ENCODE measurements at regions of chr4 and their contacts with region 1.

Region 1: DNA sequence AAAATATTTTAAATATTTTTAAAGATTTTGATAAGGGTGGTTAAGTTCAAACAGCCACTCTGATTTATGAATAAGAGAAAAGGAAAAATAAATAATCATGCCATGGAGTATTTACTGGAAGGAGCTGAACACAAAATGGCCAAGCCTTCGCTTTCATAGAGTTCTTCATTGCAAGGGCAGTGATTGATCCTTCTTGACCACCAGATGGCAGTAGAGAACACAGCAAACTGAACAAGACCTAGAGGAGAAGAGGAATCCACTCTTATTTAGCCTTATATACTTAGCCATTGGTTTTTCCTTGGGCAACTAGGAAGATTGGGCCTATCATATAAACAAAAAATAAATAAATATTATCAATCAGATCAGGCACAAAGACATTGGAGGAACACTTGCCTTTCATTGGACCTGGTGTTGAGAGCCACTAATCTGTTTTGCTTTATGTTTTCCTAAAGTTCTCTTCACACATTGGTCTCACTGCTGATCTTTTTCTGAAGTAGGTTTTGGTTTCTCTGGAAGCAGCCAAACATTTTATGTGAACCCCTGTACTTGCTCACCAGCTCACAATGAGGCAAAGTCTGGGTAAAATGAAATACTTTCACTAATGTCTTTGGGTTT is 58.1 kb upstream of the PARM1 start:
- DNase-seq: no peak
- H3K4me3 ChIP-seq: no peak overlapping the region
- H3K27ac ChIP-seq: no peak overlapping the region
- H3K4me1 ChIP-seq: no peaks in the 10 kb centered on the region
- H3K27me3 ChIP-seq: no peaks in the 10 kb centered on the region
- CTCF ChIP-seq: peak in 2 of 3 experiments; percentile 65 to 84; a peak in 3 of 4 replicates
- EP300 ChIP-seq: no peak
- POLR2A ChIP-seq: no peak
- RAD21 ChIP-seq: peak; percentile 86

Region 2: DNA sequence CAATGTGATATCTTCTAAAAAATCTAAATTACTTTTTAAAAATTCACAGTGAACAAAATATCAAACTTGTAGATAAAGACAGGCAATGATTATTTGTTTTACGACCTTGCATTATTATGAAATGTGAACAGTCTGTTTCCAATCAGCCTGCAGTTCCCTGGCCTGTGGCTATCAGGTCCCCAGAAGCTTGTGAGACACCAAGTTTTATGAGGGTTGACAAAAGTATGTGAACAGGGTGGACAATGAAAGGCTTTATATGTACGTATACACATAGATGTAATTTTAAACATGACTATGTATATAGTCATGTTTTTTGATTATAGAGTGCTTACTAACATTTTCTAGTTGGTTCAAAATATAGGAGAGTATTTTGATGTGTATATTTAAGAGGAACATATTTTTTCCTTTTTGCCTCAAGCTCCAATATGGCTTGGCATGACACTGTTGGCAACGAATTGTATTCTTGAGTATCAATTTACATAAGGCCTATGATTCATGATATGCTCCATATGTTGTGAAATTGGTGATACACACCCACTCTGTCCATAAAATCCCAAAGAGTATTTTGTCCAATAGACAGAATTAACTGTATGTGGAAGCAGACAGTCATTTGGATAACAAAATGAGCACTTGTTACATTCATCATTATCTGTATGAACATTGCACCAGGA is 136.3 kb before region 1 on chr4:
- CTCF ChIA-PET with region 1: no interaction called
- POLR2A ChIA-PET with region 1: no interaction called
- DNase-seq: no peak
- H3K4me3 ChIP-seq: no peak overlapping the region
- H3K27ac ChIP-seq: no peak overlapping the region
- H3K4me1 ChIP-seq: no peaks in the 10 kb centered on the region
- H3K27me3 ChIP-seq: no peaks in the 10 kb centered on the region
- CTCF ChIP-seq: no peak
- EP300 ChIP-seq: no peak
- POLR2A ChIP-seq: no peak
- RAD21 ChIP-seq: no peak

Region 3: DNA sequence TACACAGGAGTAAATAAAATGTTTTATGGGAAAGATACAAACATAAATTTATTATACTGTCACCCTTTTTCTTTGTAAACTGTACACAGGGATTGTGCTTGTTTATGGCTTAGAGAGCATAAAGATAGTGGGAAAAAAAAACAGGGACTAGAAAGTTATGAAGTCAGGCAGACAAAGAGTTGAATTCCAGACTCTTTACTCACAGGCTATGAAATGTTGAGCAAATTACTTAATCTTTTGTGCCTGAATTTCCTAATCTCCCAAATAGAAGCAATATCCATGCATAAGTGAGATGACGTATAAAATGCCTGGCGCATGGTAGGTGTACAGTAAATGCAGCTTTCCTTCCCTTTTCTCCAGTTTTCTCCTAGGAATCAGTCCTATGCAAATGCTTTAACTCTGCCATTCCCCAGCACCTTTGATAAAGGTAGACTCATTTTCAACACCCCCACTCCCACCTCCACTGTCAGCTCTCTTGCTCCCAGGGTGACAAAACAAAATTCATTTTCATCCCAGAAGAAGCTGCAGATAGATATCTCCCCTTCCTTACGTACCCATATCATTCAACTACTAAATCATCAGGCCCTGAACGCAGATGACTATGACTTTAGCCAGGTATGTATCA is 36.0 kb before region 1 on chr4:
- CTCF ChIA-PET with region 1: interaction called, 10 read pairs
- POLR2A ChIA-PET with region 1: no interaction called
- DNase-seq: no peak
- H3K4me3 ChIP-seq: no peak overlapping the region
- H3K27ac ChIP-seq: no peak overlapping the region
- H3K4me1 ChIP-seq: no peaks in the 10 kb centered on the region
- H3K27me3 ChIP-seq: peaks cover 0 to 1% (median 0%) of the 10 kb centered on the region in 4 experiments; a peak in 1 of 7 replicates
- CTCF ChIP-seq: no peak
- EP300 ChIP-seq: no peak
- POLR2A ChIP-seq: no peak
- RAD21 ChIP-seq: no peak

Region 4: GRCh38 chr4:74858929-74859562 is 15.8 kb before region 1 on chr4:
- CTCF ChIA-PET with region 1: interaction called, 15 read pairs
- POLR2A ChIA-PET with region 1: no interaction called
- DNase-seq: no peak
- H3K4me3 ChIP-seq: no peak overlapping the region
- H3K27ac ChIP-seq: no peak overlapping the region
- H3K4me1 ChIP-seq: no peaks in the 10 kb centered on the region
- H3K27me3 ChIP-seq: peaks cover 0 to under 1% (median 0%) of the 10 kb centered on the region in 4 experiments; a peak in 1 of 7 replicates
- CTCF ChIP-seq: no peak
- EP300 ChIP-seq: no peak
- POLR2A ChIP-seq: no peak
- RAD21 ChIP-seq: no peak

Region 5: GRCh38 chr4:75118739-75119138 is 243.9 kb after region 1 on chr4:
- CTCF ChIA-PET with region 1: interaction called, 11 read pairs
- POLR2A ChIA-PET with region 1: no interaction called
- DNase-seq: no peak
- H3K4me3 ChIP-seq: no peak overlapping the region
- H3K27ac ChIP-seq: no peak overlapping the region
- H3K4me1 ChIP-seq: no peaks in the 10 kb centered on the region
- H3K27me3 ChIP-seq: no peaks in the 10 kb centered on the region
- CTCF ChIP-seq: no peak
- EP300 ChIP-seq: no peak
- POLR2A ChIP-seq: no peak
- RAD21 ChIP-seq: no peak

Region 6: DNA sequence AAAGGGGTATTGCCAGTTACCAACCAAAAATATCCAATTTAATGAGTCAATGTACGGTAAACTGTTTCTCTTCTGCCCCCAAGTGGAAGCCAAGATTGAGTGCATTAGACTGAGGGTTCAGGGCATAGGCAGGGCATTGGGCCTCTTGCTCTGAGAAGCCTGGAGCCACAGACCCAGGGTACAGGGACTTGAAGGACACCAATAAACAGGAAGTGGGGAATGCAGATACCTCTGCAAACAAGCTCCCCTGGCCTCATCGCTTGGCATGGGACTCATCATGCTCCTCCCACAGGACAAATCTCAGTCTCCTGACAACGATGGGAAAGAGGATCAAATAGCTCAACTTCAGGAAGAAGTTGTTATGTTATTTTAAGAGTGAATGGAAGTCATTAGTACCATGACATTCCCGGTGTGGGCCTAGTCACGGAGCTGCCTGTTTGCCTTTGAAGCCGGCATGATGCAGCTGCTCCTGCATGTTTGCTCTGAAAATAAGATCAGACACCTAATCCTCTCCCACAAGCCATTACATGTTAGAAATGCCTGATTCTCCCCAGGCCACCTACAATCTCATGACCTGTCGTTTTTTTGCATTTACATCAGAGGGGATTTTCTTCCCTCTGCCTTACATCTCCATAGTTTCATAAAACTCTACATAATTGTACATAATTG is 415.2 kb after region 1 on chr4:
- CTCF ChIA-PET with region 1: interaction called, 42 read pairs
- POLR2A ChIA-PET with region 1: no interaction called
- DNase-seq: peak; percentile 27 to 52
- H3K4me3 ChIP-seq: no peak overlapping the region
- H3K27ac ChIP-seq: no peak overlapping the region
- H3K4me1 ChIP-seq: no peaks in the 10 kb centered on the region; a peak in 1 of 7 replicates
- H3K27me3 ChIP-seq: no peaks in the 10 kb centered on the region
- CTCF ChIP-seq: peak; percentile 33 to 76 (median 72)
- EP300 ChIP-seq: no peak
- POLR2A ChIP-seq: no peak
- RAD21 ChIP-seq: peak; percentile 88 to 93

Region 7: GRCh38 chr4:75469896-75470295 is 595.0 kb after region 1 on chr4:
- CTCF ChIA-PET with region 1: interaction called, 17 read pairs
- POLR2A ChIA-PET with region 1: no interaction called
- DNase-seq: no peak
- H3K4me3 ChIP-seq: no peak overlapping the region
- H3K27ac ChIP-seq: no peak overlapping the region
- H3K4me1 ChIP-seq: no peaks in the 10 kb centered on the region
- H3K27me3 ChIP-seq: no peaks in the 10 kb centered on the region
- CTCF ChIP-seq: no peak
- EP300 ChIP-seq: no peak
- POLR2A ChIP-seq: no peak
- RAD21 ChIP-seq: no peak

Measured in H1 (cell line).